ENCODE measurements at regions of chr20 and their contacts with region 1.

Region 1: DNA sequence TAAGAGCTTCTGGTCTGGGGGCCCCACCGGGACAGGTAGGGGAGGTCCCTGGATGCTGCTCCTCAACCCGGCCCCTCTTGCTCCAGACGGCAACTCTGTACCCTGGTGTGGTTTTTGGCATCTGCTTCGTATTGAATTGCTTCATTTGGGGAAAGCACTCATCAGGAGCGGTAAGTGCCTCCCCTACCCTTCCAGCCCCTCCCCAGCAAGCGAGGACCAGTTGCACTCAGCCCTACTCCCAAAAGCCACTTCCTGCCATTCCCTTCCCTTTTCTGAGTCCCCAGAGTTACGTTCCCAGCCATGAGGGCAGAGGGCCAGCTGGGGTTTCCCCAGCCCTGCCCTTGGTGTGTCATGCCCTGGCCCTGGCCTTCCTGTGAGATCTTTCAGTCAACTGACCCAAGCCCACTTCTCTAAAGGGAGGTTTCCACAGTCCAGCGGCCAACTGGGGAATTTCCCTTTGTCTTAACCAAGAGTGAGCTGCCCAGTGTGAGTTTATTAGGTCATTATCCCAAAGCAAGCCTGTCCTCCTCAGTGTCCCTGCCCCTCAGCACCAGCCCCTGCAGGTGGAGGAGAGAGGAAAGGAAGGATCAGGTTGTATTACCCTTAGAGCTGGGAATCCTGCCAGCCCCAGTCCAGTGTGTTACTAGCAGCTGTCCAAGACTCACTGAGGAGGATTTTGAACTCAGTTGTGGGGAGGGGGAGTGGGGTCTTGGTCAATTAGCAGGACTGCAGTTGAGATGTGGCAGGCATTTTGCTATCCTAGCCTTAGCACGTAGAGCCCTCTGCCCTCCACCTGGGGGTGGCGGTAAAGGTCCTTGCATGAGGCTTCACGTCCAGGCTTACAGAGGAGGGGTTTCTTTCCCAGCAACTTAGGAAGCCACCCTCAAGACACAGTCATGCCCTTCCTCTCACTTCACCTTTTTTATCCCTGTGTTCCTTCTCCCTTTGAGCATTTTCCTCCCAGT is 45.8 kb downstream of the TM9SF4 start:
- DNase-seq: peak; percentile 83 to 93 (median 92)
- ATAC-seq: peak; percentile 88 to 96 (median 95)
- H3K4me3 ChIP-seq: no peak overlapping the region
- H3K27ac ChIP-seq: peak overlapping the region; percentile 21 to 50 (median 39)
- H3K4me1 ChIP-seq: peaks cover 0 to 13% (median 5%) of the 10 kb centered on the region in 4 donors
- H3K27me3 ChIP-seq: no peaks in the 10 kb centered on the region
- CTCF ChIP-seq: peak in 2 of 4 donors; percentile 24 to 37
- POLR2A ChIP-seq: no peak

Region 2: GRCh38 chr20:32227744-32228688 is 72.7 kb after region 1 on chr20:
- intact Hi-C with region 1: loop called in 1 of 2 experiments (anchors 10 kb)
- DNase-seq: peak in 1 of 3 donors; percentile 31
- ATAC-seq: peak; percentile 71 to 75 (median 74)
- H3K4me3 ChIP-seq: no peak overlapping the region
- H3K27ac ChIP-seq: peak overlapping the region in 2 of 3 donors; percentile 48 to 72
- H3K4me1 ChIP-seq: peaks cover 0 to 32% (median 10%) of the 10 kb centered on the region in 4 donors
- H3K27me3 ChIP-seq: no peaks in the 10 kb centered on the region
- CTCF ChIP-seq: no peak
- POLR2A ChIP-seq: no peak

Measured in right lobe of liver (tissue), 6 donors.